ENCODE measurements at regions of chr16 and their contacts with region 1.

Region 1: GRCh38 chr16:58755989-58756649 is 22.0 kb upstream of the GOT2 start:
- DNase-seq: peak; percentile 82
- H3K4me3 ChIP-seq: no peak overlapping the region
- H3K27ac ChIP-seq: peak overlapping the region; percentile 15
- H3K4me1 ChIP-seq: peaks cover 8% of the 10 kb centered on the region
- H3K27me3 ChIP-seq: no peaks in the 10 kb centered on the region
- CTCF ChIP-seq: peak; percentile 68 to 73
- POLR2A ChIP-seq: no peak

Region 2: DNA sequence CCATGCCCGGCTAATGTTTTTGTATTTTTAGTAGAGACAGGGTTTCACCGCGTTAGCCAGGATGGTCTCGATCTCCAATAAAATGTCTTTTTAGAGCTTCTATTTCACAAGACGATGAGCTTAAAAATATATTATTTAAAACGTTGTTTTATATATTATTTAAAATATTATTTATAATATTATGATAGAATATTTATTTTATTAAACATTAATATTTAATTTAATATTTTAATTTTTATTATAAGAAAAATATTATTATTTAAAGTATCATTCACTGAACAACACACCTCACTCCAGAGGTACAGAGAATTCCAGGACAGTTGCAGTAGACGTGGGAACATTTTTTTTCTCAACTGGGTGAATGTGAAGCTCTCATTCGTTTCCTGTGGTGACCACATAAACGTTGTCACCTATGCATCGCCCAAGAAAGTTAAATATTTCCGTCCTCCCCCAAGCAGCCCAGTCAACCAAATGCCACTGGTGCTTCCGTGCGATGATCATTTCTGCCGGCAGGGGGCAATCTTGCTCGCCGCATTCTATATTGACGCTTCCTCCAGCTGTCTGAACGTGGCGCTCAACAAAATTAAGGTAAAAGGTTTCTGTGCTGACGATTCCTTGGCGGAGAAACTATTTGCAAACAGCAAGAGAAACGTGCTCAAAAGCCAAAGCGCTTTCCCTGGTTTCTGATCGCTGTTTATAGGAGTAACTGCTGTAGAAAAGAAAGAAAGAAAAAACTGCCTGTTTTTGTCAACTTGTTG is 419.6 kb before region 1 on chr16:
- CTCF ChIA-PET with region 1: interaction called, 46 read pairs
- POLR2A ChIA-PET with region 1: no interaction called
- dilution Hi-C with region 1: no loop called
- intact Hi-C with region 1: loop called (anchors 5 kb)
- DNase-seq: peak; percentile 79
- H3K4me3 ChIP-seq: peak overlapping the region in 1 of 3 experiments; percentile 50
- H3K27ac ChIP-seq: no peak overlapping the region
- H3K4me1 ChIP-seq: peaks cover 7% of the 10 kb centered on the region
- H3K27me3 ChIP-seq: peaks cover 0 to 1% of the 10 kb centered on the region in 2 experiments
- CTCF ChIP-seq: peak; percentile 85 to 94
- POLR2A ChIP-seq: no peak

Region 3: GRCh38 chr16:58515125-58515870 is 240.8 kb before region 1 on chr16 and contains the start of gene SETD6:
- CTCF ChIA-PET with region 1: interaction called, 73 read pairs
- POLR2A ChIA-PET with region 1: no interaction called
- dilution Hi-C with region 1: no loop called
- intact Hi-C with region 1: loop called (anchors 1 kb)
- DNase-seq: peak; percentile 90
- H3K4me3 ChIP-seq: peak within 1 kb of the TSS; percentile 32 to 70 (median 63)
- H3K27ac ChIP-seq: peak within 1 kb of the TSS; percentile 50
- H3K4me1 ChIP-seq: peaks cover 12% of the 10 kb centered on the region
- H3K27me3 ChIP-seq: no peaks in the 10 kb centered on the region
- CTCF ChIP-seq: peak in 1 of 2 donors; percentile 23
- POLR2A ChIP-seq: peak; percentile 80
- total RNA-seq, gene SETD6: 10.4 and 16.4 TPM in 2 replicates

Region 4: DNA sequence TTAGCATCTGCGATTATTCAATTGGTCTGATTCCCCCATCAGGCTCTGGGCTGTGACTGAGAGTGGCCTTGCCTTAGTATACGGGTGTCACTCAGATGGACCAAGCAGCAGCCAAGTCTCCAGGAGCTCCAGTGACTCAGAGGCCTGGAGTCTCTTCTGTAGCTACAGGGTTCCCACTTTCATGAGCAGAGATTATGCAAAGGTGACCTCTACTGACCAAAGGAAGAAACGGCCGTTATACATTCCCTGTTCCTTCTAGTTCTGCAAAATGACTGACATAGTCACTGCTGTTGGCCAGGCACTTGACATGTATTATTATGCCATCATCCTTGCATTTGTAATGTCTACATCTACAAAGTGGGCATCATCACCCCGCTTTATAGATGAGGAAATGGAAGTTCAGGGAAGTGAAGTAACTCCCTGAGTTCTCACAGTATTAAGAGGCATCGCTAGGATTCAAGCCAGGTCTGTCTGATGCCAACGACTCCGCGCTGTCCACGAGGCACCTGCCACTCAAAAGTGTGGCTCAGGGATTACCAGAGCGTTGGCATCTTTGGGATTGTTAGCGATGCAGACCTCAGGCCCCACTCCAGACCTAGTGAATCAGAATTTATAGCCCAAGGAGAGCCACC is 94.8 kb before region 1 on chr16:
- CTCF ChIA-PET with region 1: interaction called, 64 read pairs
- POLR2A ChIA-PET with region 1: no interaction called
- dilution Hi-C with region 1: no loop called
- intact Hi-C with region 1: loop called (anchors 1 kb)
- DNase-seq: peak; percentile 81
- H3K4me3 ChIP-seq: no peak overlapping the region
- H3K27ac ChIP-seq: no peak overlapping the region
- H3K4me1 ChIP-seq: no peaks in the 10 kb centered on the region
- H3K27me3 ChIP-seq: no peaks in the 10 kb centered on the region
- CTCF ChIP-seq: peak; percentile 55 to 65
- POLR2A ChIP-seq: no peak

Region 5: DNA sequence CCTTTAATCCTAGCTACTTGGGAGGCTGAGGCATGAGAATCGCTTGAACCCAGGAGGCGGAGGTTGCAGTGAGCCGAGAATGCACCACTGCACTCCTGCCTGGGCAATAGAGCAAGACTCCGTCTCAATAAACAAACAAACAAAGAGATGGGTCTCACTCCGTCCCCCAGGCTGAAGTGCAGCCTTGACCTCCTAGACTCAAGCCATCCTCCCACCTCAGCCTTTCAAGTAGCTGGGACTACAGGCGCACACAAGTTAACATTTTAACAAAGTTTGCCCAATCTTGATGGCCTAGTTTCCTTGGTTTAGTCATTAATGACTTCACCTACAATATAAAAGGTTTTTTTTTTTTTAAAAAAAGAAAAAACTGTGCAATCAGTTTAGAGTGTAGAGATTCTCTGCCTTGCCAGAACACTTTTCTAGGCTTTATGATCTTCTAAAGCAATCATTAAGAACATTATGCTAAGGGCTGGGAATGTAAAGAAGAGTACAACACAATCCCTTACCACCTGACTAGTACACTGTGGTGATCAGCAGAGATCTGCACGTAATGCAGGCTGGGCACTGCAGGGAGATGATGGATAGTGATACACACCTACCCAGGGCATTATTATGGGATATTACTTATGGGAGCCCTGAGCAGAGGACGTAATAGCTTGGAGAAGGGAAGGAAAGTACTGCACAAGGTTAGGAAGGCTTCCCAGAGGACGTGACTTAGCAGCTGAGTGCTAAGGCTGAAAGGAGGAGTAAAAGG is 28.9 kb before region 1 on chr16:
- CTCF ChIA-PET with region 1: interaction called, 64 read pairs
- POLR2A ChIA-PET with region 1: no interaction called
- dilution Hi-C with region 1: no loop called
- intact Hi-C with region 1: no loop called
- DNase-seq: no peak
- H3K4me3 ChIP-seq: no peak overlapping the region
- H3K27ac ChIP-seq: no peak overlapping the region
- H3K4me1 ChIP-seq: peaks cover 2% of the 10 kb centered on the region
- H3K27me3 ChIP-seq: no peaks in the 10 kb centered on the region
- CTCF ChIP-seq: no peak
- POLR2A ChIP-seq: no peak

Measured in endothelial cell of umbilical vein (primary cell).